ENCODE measurements at regions of chr10 and their contacts with region 1.

Region 1: GRCh38 chr10:31864834-31865518 is 63.7 kb downstream of the ARHGAP12 start:
- DNase-seq: no peak
- CTCF ChIP-seq: no peak

Region 2: DNA sequence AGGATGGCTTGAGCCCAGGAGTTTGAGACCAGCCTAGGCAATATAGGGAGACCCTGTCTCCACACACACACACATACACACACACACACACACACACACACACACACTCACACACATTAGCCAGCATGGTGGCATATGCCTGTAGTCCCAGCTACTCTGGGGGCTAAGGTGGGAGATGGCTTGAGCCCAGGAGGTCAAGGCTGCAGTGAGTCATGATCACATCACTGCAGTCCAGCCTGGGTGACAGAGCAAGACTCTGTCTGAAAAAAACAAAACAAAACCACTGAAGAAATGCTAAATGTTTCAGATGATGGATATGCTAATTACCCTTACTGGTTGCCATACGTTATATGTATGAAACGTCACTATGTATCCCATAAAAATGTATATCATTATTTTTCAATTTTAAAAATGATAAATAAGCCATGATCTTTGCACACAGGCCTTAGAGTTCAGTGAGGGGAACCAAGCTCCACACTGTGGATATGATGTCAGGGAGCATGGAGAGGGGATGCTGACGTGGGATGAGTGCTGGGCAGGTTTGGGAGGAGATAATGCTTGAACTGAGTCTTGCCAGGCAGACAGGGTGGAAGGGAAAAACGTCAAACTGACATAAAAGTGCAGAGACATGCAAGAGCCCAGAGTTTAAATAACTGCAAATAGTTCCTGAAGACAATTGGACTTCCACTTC is 109.6 kb after region 1 on chr10:
- in situ Hi-C with region 1: no loop called
- DNase-seq: no peak
- CTCF ChIP-seq: no peak

Region 3: GRCh38 chr10:32005050-32005449 is 140.1 kb after region 1 on chr10:
- in situ Hi-C with region 1: loop called (anchors 10 kb)
- DNase-seq: peak; percentile 46
- CTCF ChIP-seq: peak; percentile 58

Region 4: GRCh38 chr10:32346134-32346550 is 481.2 kb after region 1 on chr10:
- in situ Hi-C with region 1: loop called (anchors 25 kb)
- DNase-seq: peak; percentile 96
- CTCF ChIP-seq: peak; percentile 94

Measured in GM13977 (cell line).